GM12878 (cell line): ENCODE measurements at regions of chr4 and their contacts with region 1.

Region 1: DNA sequence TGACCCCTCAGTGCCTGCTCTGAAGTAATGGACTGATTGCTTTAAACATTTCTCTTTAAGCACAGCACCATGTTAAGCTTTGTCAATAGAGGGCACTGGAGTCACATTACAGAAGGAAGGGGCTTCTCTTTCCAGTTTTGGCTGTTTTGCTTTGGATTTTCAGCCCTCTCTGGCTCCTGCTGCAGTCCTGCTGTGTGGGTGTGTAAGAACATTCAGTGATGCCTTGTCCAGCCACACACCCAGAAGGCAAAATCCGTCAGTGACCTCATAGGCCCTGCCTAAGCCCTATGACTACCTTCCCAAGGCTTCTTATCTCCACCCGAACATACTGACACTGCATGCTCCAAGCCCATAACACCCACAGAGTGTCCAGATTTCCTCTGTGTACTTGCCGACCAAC is 215.3 kb upstream of the CTSO start:
- DNase-seq: no peak
- ATAC-seq: peak; percentile 89
- H3K4me3 ChIP-seq: no peak overlapping the region
- H3K27ac ChIP-seq: no peak overlapping the region
- H3K4me1 ChIP-seq: no peaks in the 10 kb centered on the region
- H3K27me3 ChIP-seq: no peaks in the 10 kb centered on the region
- CTCF ChIP-seq: peak; percentile 61 to 72 (median 66)
- EP300 ChIP-seq: no peak
- POLR2A ChIP-seq: no peak
- RAD21 ChIP-seq: peak; percentile 98

Region 2: DNA sequence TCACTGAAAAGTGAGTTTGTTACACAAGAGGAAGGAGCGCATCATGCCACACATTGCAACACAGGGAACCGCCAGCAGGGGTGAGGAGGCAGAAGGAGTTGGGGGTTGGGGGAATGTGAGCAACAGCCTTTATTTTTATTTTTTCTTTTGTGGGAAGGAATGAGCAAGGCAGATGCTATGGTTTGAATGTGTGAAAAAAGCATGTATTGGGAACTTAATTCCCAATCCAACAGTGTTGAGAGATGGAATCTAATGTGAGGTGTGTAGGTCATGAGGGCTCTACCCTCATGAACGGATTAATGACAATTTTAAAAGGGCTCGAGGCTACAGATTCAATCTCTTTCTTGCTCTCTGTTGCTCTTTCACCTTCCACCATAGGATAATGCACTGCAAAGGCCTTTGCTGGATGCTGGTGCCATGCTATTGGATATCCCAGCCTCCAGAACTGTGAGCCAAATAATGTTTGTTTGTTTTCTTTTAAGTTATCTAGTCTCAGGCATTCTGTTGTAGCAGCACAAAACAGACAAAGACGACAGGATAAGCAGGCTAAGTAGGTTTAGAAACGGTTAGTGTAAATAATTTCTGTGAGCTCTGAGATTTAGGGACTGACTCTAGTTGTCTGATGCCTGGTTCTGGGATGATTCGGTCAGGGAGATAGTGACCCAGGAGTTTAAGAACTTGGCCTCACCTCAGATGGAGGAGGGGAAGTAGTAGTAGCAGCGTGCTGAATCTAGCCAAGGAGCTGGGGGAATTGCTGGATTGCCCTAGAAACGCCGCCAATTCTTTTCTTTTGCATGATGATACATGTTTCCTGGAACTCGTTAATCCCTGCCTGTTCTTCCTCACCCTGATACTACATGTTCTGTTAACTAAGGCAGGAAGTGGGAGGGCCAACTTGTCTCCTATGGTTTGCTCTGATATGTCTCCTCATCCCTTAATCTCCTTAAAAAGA is 58.8 kb before region 1 on chr4:
- CTCF ChIA-PET with region 1: interaction called, 22 read pairs
- POLR2A ChIA-PET with region 1: interaction called, 4 read pairs
- RAD21 ChIA-PET with region 1: interaction called, 6 read pairs
- SMC1A ChIA-PET with region 1: interaction called, 10 read pairs
- in situ Hi-C with region 1: no loop called
- intact Hi-C with region 1: no loop called
- DNase-seq: no peak
- ATAC-seq: peak; percentile 69
- H3K4me3 ChIP-seq: no peak overlapping the region
- H3K27ac ChIP-seq: no peak overlapping the region
- H3K4me1 ChIP-seq: no peaks in the 10 kb centered on the region
- H3K27me3 ChIP-seq: no peaks in the 10 kb centered on the region
- CTCF ChIP-seq: peak in 2 of 3 experiments; percentile 23 to 40; a peak in 2 of 6 replicates
- EP300 ChIP-seq: no peak
- POLR2A ChIP-seq: no peak
- RAD21 ChIP-seq: no peak

Region 3: DNA sequence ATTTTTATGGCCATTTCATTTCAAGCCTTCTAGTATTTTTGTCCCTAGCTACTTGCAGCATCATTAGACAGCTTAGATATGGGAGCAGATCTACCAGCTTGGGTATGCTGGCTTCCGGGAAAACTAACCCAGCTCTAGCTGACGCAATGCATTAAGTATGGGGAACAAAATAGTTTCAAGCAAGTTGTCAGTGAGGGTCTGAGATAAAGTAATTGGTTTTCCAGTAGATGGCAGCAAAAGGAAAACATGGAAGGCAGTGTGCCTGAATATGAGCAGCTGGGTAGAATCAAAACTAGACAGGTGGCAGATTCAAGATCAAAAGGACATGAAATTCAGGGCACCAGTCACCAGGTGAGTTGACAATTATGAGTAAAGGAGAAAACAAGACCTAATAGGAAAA is 125.6 kb after region 1 on chr4:
- CTCF ChIA-PET with region 1: interaction called, 6 read pairs
- POLR2A ChIA-PET with region 1: no interaction called
- RAD21 ChIA-PET with region 1: interaction called, 12 read pairs
- SMC1A ChIA-PET with region 1: interaction called, 4 read pairs
- in situ Hi-C with region 1: no loop called
- intact Hi-C with region 1: no loop called
- DNase-seq: no peak
- ATAC-seq: peak; percentile 55
- H3K4me3 ChIP-seq: no peak overlapping the region
- H3K27ac ChIP-seq: no peak overlapping the region
- H3K4me1 ChIP-seq: no peaks in the 10 kb centered on the region
- H3K27me3 ChIP-seq: no peaks in the 10 kb centered on the region
- CTCF ChIP-seq: peak in 1 of 3 experiments; percentile 29; a peak in 2 of 6 replicates
- EP300 ChIP-seq: no peak
- POLR2A ChIP-seq: no peak
- RAD21 ChIP-seq: peak; percentile 50; the same call in 1 of the 2 replicates

Region 4: DNA sequence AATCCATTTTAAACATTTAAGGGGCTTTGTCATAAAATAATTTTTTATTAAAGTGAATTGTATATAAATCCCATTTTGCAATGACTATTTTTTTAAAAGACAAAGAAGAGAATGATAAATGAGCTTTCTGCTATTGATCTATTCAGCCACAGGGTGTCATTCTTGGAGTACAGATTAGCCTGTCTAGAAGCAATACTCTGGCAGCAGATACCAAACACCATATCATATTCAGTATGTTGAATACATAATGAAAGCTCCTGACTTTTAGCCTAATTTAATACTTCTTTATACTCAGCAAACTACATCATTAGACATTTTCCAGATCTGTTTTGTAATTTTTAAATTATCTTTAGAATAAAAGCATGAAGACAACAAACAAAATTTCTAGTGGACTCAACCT is 306.3 kb after region 1 on chr4:
- CTCF ChIA-PET with region 1: interaction called, 4 read pairs
- POLR2A ChIA-PET with region 1: no interaction called
- RAD21 ChIA-PET with region 1: interaction called, 5 read pairs
- SMC1A ChIA-PET with region 1: interaction called, 5 read pairs
- in situ Hi-C with region 1: no loop called
- intact Hi-C with region 1: loop called (anchors 5 kb)
- DNase-seq: no peak
- ATAC-seq: peak; percentile 61
- H3K4me3 ChIP-seq: no peak overlapping the region
- H3K27ac ChIP-seq: no peak overlapping the region
- H3K4me1 ChIP-seq: no peaks in the 10 kb centered on the region
- H3K27me3 ChIP-seq: no peaks in the 10 kb centered on the region
- CTCF ChIP-seq: peak in 2 of 3 experiments; percentile 13 to 34; a peak in 2 of 6 replicates
- EP300 ChIP-seq: no peak
- POLR2A ChIP-seq: no peak
- RAD21 ChIP-seq: peak; percentile 68

Region 5: GRCh38 chr4:156968479-156968984 is 799.5 kb after region 1 on chr4:
- CTCF ChIA-PET with region 1: interaction called, 21 read pairs
- POLR2A ChIA-PET with region 1: no interaction called
- RAD21 ChIA-PET with region 1: interaction called, 7 read pairs
- SMC1A ChIA-PET with region 1: interaction called, 3 read pairs
- in situ Hi-C with region 1: no loop called
- intact Hi-C with region 1: loop called (anchors 2 kb)
- DNase-seq: no peak
- ATAC-seq: peak; percentile 93
- H3K4me3 ChIP-seq: no peak overlapping the region
- H3K27ac ChIP-seq: no peak overlapping the region
- H3K4me1 ChIP-seq: no peaks in the 10 kb centered on the region
- H3K27me3 ChIP-seq: peaks cover 4 to 18% of the 10 kb centered on the region in 2 experiments
- CTCF ChIP-seq: peak; percentile 73 to 76 (median 74)
- EP300 ChIP-seq: no peak
- POLR2A ChIP-seq: no peak
- RAD21 ChIP-seq: peak; percentile 74